ENCODE measurements at regions of chr13 and their contacts with region 1.

Region 1: GRCh38 chr13:99027260-99027659 is 49.4 kb upstream of the DOCK9 start:
- DNase-seq: no peak
- ATAC-seq: no peak
- H3K4me3 ChIP-seq: no peak overlapping the region
- H3K4me3 Mint-ChIP-seq: peak overlapping the region in 1 of 10 donors; percentile 53
- H3K27ac ChIP-seq: no peak overlapping the region
- H3K27ac Mint-ChIP-seq: peak overlapping the region in 4 of 9 donors; percentile 35 to 86 (median 72)
- H3K4me1 ChIP-seq: peaks cover 0 to 27% of the 10 kb centered on the region in 2 donors
- H3K4me1 Mint-ChIP-seq: peaks cover 24 to 93% (median 88%) of the 10 kb centered on the region in 7 donors
- H3K27me3 ChIP-seq: no peaks in the 10 kb centered on the region
- H3K27me3 Mint-ChIP-seq: no peaks in the 10 kb centered on the region

Region 2: GRCh38 chr13:99051768-99052455 is 24.7 kb after region 1 on chr13:
- CTCF ChIA-PET with region 1: interaction called, 5 read pairs
- POLR2A ChIA-PET with region 1: interaction called, 9 read pairs
- intact Hi-C with region 1: loop called (anchors 2 kb)
- DNase-seq: peak in 7 of 9 donors; percentile 48 to 81 (median 71)
- ATAC-seq: peak; percentile 65
- H3K4me3 ChIP-seq: peak overlapping the region; percentile 49
- H3K4me3 Mint-ChIP-seq: peak overlapping the region; percentile 75 to 88 (median 80)
- H3K27ac ChIP-seq: peak overlapping the region; percentile 61
- H3K27ac Mint-ChIP-seq: peak overlapping the region; percentile 72 to 96 (median 91)
- H3K4me1 ChIP-seq: peaks cover 72 to 95% of the 10 kb centered on the region in 2 donors
- H3K4me1 Mint-ChIP-seq: peaks cover 68 to 100% (median 92%) of the 10 kb centered on the region in 7 donors
- H3K27me3 ChIP-seq: no peaks in the 10 kb centered on the region
- H3K27me3 Mint-ChIP-seq: peaks cover 0 to 10% (median 0%) of the 10 kb centered on the region in 5 donors

Region 3: GRCh38 chr13:99062593-99062992 is 35.3 kb after region 1 on chr13:
- CTCF ChIA-PET with region 1: no interaction called
- POLR2A ChIA-PET with region 1: no interaction called
- intact Hi-C with region 1: no loop called
- DNase-seq: no peak
- ATAC-seq: no peak
- H3K4me3 ChIP-seq: no peak overlapping the region
- H3K4me3 Mint-ChIP-seq: peak overlapping the region in 8 of 10 donors; percentile 12 to 60 (median 28)
- H3K27ac ChIP-seq: no peak overlapping the region
- H3K27ac Mint-ChIP-seq: peak overlapping the region in 6 of 9 donors; percentile 19 to 86 (median 66)
- H3K4me1 ChIP-seq: peaks cover 14 to 73% of the 10 kb centered on the region in 2 donors
- H3K4me1 Mint-ChIP-seq: peaks cover 56 to 99% (median 95%) of the 10 kb centered on the region in 7 donors
- H3K27me3 ChIP-seq: no peaks in the 10 kb centered on the region
- H3K27me3 Mint-ChIP-seq: peaks cover 0 to 22% (median 0%) of the 10 kb centered on the region in 5 donors

Measured in naive thymus-derived CD4-positive, alpha-beta T cell (primary cell).